ENCODE measurements at regions of chr1 and their contacts with region 1.

Region 1: DNA sequence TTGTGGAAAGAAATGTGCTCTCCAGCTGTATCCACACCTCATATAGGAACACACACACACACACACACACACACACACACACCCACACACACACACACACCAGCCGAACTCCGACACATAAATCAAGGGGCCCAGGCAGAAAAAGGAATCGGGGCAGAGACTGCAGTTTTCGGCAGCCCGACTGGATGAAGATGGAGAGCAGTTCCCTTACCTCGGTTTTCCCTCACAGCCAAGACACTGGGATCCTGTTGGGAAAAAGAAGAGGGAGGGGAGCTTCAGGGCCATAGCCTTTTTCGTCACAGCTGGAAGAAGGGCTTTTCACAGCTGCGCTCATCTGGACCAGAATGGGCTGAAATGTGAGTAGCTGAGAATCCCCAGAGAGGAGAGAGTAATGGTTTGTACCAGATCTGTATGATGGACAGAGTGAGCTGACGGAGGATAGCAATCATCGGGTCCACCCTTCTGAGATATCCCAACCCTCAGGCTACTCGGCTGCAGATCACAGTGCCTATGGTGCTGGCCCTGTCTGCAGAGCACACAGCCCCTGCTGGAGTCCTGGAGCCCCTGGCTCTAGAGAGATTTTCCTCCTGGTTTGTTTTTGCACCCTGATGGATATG is 37.7 kb downstream of the PIK3C2B start:
- DNase-seq: no peak
- ATAC-seq: peak; percentile 32
- H3K4me3 ChIP-seq: no peak overlapping the region
- H3K27ac ChIP-seq: no peak overlapping the region
- H3K4me1 ChIP-seq: no peaks in the 10 kb centered on the region
- H3K27me3 ChIP-seq: no peaks in the 10 kb centered on the region
- CTCF ChIP-seq: no peak
- POLR2A ChIP-seq: no peak
- RAD21 ChIP-seq: no peak

Region 2: GRCh38 chr1:204162231-204163074 is 294.5 kb before region 1 on chr1:
- CTCF ChIA-PET with region 1: no interaction called
- POLR2A ChIA-PET with region 1: no interaction called
- dilution Hi-C with region 1: no loop called
- in situ Hi-C with region 1: no loop called
- intact Hi-C with region 1: no loop called
- DNase-seq: peak; percentile 56
- ATAC-seq: peak; percentile 98
- H3K4me3 ChIP-seq: no peak overlapping the region
- H3K27ac ChIP-seq: no peak overlapping the region
- H3K4me1 ChIP-seq: no peaks in the 10 kb centered on the region
- H3K27me3 ChIP-seq: peaks cover 1% of the 10 kb centered on the region; the same call in 1 of the 2 replicates
- CTCF ChIP-seq: peak; percentile 99
- POLR2A ChIP-seq: peak; percentile 58
- RAD21 ChIP-seq: peak; percentile 99

Region 3: DNA sequence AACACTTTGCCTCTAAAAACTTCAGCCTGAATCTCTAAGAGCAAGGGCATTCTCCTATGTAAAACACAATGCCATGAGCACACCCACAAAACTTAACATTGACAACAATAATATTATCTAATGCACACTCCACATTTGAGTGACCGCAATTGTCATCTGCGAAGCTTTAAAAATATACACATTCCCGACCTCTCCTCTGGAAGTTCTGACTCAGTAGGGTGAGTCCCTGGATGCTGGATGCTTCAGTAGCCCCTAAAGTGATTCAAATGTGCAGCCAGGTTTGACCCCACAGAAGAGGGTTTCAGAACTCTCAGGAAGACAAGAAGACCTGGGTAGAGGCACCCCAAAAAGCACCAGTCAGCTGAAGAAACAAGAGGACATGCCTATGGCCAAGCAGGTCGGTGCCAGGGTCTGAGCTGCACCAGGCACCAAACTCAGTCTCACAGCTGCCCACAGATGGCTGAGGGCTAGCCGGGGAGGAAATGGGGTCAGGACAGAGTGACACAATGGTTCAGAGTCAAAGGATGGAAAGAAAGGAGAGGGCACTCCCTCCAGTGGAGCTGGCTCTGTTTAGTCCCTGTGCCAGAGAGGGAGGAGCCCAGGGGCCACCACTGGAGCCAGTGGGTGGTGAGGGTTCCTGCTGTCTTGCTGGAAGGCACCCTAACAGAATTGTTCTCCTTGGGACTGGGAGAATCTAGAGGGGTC is 20.3 kb after region 1 on chr1:
- CTCF ChIA-PET with region 1: interaction called, 4 read pairs
- POLR2A ChIA-PET with region 1: no interaction called
- dilution Hi-C with region 1: no loop called
- in situ Hi-C with region 1: no loop called
- intact Hi-C with region 1: loop called (anchors 2 kb)
- DNase-seq: peak; percentile 48
- ATAC-seq: peak; percentile 71
- H3K4me3 ChIP-seq: no peak overlapping the region
- H3K27ac ChIP-seq: no peak overlapping the region
- H3K4me1 ChIP-seq: peaks cover 6% of the 10 kb centered on the region; the same call in 1 of the 2 replicates
- H3K27me3 ChIP-seq: peaks cover 8% of the 10 kb centered on the region
- CTCF ChIP-seq: no peak
- POLR2A ChIP-seq: no peak
- RAD21 ChIP-seq: no peak